ENCODE measurements at regions of chr11 and their contacts with region 1.

Region 1: GRCh38 chr11:120172054-120172911 is 34.4 kb upstream of the TRIM29 start:
- H3K4me3 ChIP-seq: no peak overlapping the region
- H3K27ac ChIP-seq: no peak overlapping the region
- H3K4me1 ChIP-seq: no peaks in the 10 kb centered on the region
- CTCF ChIP-seq: peak; percentile 65

Region 2: GRCh38 chr11:119982517-119983239 is 189.6 kb before region 1 on chr11:
- CTCF ChIA-PET with region 1: no interaction called
- POLR2A ChIA-PET with region 1: no interaction called
- H3K4me3 ChIP-seq: no peak overlapping the region
- H3K27ac ChIP-seq: no peak overlapping the region
- H3K4me1 ChIP-seq: no peaks in the 10 kb centered on the region
- CTCF ChIP-seq: no peak

Region 3: GRCh38 chr11:120153221-120153620 is 19.1 kb before region 1 on chr11:
- CTCF ChIA-PET with region 1: interaction called, 12 read pairs
- POLR2A ChIA-PET with region 1: no interaction called
- H3K4me3 ChIP-seq: no peak overlapping the region
- H3K27ac ChIP-seq: no peak overlapping the region
- H3K4me1 ChIP-seq: no peaks in the 10 kb centered on the region
- CTCF ChIP-seq: no peak

Region 4: GRCh38 chr11:120188811-120189455 is 16.6 kb after region 1 on chr11:
- CTCF ChIA-PET with region 1: interaction called, 12 read pairs
- POLR2A ChIA-PET with region 1: no interaction called
- H3K4me3 ChIP-seq: no peak overlapping the region
- H3K27ac ChIP-seq: no peak overlapping the region
- H3K4me1 ChIP-seq: no peaks in the 10 kb centered on the region
- CTCF ChIP-seq: no peak

Region 5: DNA sequence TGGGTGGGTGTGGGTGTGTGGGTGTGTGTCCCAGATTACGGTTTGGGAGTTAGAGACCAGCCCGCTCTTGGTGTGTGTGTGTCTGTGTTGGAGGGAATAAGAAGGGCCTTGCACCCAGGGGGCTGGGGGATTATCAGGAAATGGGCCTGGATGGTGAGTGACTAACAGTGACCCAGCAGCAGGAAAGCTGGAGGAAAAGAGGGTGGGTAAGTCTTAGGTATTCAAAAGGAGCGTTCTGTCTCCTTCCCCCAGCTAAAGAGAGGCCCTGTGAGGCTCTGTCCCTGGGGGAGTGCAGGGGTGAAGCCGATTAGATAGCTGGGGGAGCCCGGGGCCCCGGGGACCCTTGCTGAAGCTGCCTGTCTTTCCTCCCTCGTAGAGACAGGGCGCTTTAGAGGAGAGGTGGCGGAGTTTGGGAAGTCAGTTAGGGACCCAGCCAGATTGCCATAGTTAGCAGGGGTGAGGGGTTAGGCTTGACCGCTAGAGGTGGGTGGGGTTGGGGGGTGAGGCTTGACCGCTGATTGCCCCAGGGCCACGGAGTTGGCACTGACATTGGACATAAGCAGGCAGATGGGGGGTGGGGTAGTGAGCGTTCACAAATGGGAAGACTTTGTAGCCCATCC is 40.1 kb after region 1 on chr11:
- CTCF ChIA-PET with region 1: interaction called, 11 read pairs
- POLR2A ChIA-PET with region 1: no interaction called
- H3K4me3 ChIP-seq: no peak overlapping the region
- H3K27ac ChIP-seq: no peak overlapping the region
- H3K4me1 ChIP-seq: peaks cover 7% of the 10 kb centered on the region; the same call in 1 of the 2 replicates
- CTCF ChIP-seq: no peak

Region 6: GRCh38 chr11:120229451-120230424 is 57.5 kb after region 1 on chr11:
- CTCF ChIA-PET with region 1: interaction called, 103 read pairs
- POLR2A ChIA-PET with region 1: no interaction called
- H3K4me3 ChIP-seq: no peak overlapping the region
- H3K27ac ChIP-seq: no peak overlapping the region
- H3K4me1 ChIP-seq: no peaks in the 10 kb centered on the region
- CTCF ChIP-seq: no peak

Region 7: GRCh38 chr11:120235024-120235861 is 63.0 kb after region 1 on chr11:
- CTCF ChIA-PET with region 1: interaction called, 103 read pairs
- POLR2A ChIA-PET with region 1: no interaction called
- H3K4me3 ChIP-seq: no peak overlapping the region
- H3K27ac ChIP-seq: no peak overlapping the region
- H3K4me1 ChIP-seq: no peaks in the 10 kb centered on the region
- CTCF ChIP-seq: peak; percentile 75